Tibial artery (tissue), 4 donors: ENCODE measurements at regions of chr3 and their contacts with region 1.

Region 1: GRCh38 chr3:124409789-124410261 is 320.4 kb upstream of the UMPS start:
- DNase-seq: no peak
- H3K4me3 ChIP-seq: no peak overlapping the region
- H3K27ac ChIP-seq: peak overlapping the region; percentile 8 to 18
- H3K4me1 ChIP-seq: peaks cover 0 to 24% (median 3%) of the 10 kb centered on the region in 4 donors
- H3K27me3 ChIP-seq: no peaks in the 10 kb centered on the region
- CTCF ChIP-seq: no peak

Region 2: GRCh38 chr3:124007186-124007585 is 402.6 kb before region 1 on chr3:
- intact Hi-C with region 1: no loop called
- DNase-seq: no peak
- H3K4me3 ChIP-seq: no peak overlapping the region
- H3K27ac ChIP-seq: no peak overlapping the region
- H3K4me1 ChIP-seq: peaks cover 0 to 18% (median 0%) of the 10 kb centered on the region in 4 donors
- H3K27me3 ChIP-seq: no peaks in the 10 kb centered on the region
- CTCF ChIP-seq: no peak

Region 3: GRCh38 chr3:124451630-124452317 is 41.9 kb after region 1 on chr3:
- intact Hi-C with region 1: loop called (anchors 1 kb)
- DNase-seq: no peak
- H3K4me3 ChIP-seq: no peak overlapping the region
- H3K27ac ChIP-seq: no peak overlapping the region
- H3K4me1 ChIP-seq: no peaks in the 10 kb centered on the region
- H3K27me3 ChIP-seq: no peaks in the 10 kb centered on the region
- CTCF ChIP-seq: no peak

Region 4: DNA sequence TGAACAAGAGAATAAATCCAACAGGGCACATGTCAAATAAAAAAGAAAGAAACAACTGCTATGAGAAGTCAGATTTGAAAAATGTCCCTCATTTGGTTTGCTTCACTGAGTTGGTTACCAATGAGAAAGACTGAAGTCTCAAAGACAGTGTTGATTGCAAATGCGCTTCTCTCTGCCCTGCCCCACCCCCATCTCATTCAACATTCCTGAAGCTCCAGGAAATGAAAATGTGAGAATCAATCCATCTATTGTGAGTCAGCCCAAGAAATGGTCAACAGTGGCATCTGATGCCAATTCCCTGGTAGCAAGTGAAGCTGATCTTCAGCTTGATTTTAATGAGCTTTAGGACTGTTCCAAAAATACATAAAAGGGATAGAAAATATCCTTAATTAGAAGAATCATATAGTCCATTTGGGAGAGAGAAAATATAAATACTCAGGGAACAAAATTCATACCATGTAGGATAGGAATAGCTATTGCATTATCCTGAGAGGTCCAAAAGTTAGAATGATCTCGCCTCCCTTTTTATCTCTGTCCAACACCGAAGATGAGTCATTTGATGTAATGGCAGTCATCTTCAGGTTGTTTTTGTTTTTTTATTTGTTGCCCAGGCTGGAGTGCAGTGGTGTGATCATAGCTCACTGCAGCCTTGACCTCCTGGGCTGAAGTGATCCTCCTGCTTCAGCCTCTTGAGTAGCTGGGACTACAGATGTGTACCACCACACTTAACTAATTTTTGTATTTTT is 120.2 kb after region 1 on chr3:
- intact Hi-C with region 1: no loop called
- DNase-seq: no peak
- H3K4me3 ChIP-seq: no peak overlapping the region
- H3K27ac ChIP-seq: no peak overlapping the region
- H3K4me1 ChIP-seq: no peaks in the 10 kb centered on the region
- H3K27me3 ChIP-seq: no peaks in the 10 kb centered on the region
- CTCF ChIP-seq: no peak